ENCODE measurements at regions of chr15 and their contacts with region 1.

Region 1: DNA sequence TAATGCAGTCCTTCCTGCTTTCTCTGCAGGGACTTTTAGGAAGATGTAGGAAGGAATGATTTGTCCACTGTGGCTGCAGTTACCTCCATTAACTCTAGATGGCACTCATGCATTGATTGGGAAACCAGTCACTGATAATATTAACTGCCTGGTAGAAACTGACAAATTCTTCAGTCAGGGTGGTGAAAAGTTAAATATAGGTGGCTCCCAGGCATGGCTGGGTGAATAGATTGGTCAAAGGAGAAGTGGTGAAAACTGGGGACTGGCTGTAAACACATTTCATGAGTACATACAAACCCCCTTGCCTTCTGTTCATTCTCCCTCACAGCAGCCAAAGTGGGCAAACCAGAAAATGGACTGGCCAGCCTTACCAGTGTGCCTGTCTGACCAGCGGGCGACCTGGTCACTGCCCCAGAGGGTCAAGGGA is 333.4 kb downstream of the THSD4 start:
- DNase-seq: peak in 1 of 10 donors; percentile 53
- H3K4me3 ChIP-seq: no peak overlapping the region
- H3K27ac ChIP-seq: peak overlapping the region in 12 of 59 donors; percentile 1 to 46 (median 20)
- H3K27me3 ChIP-seq: no peaks in the 10 kb centered on the region
- CTCF ChIP-seq: peak; percentile 67 to 96 (median 88)

Region 2: GRCh38 chr15:71730277-71731144 is 281.8 kb after region 1 on chr15:
- intact Hi-C with region 1: loop called (anchors 1 to 5 kb)
- DNase-seq: peak in 2 of 10 donors; percentile 49 to 58
- H3K4me3 ChIP-seq: no peak overlapping the region
- H3K27ac ChIP-seq: no peak overlapping the region
- H3K27me3 ChIP-seq: peaks cover 0 to 7% (median 0%) of the 10 kb centered on the region in 45 donors
- CTCF ChIP-seq: peak; percentile 52 to 87 (median 75)

Region 3: GRCh38 chr15:71800835-71801745 is 352.4 kb after region 1 on chr15:
- intact Hi-C with region 1: loop called (anchors 5 to 10 kb)
- DNase-seq: peak in 3 of 10 donors; percentile 43 to 72 (median 54)
- H3K4me3 ChIP-seq: peak overlapping the region in 30 of 59 donors; percentile 4 to 44 (median 28)
- H3K27ac ChIP-seq: peak overlapping the region in 4 of 59 donors; percentile 2 to 48 (median 34)
- H3K27me3 ChIP-seq: no peaks in the 10 kb centered on the region
- CTCF ChIP-seq: peak; percentile 64 to 92 (median 84)

Measured in dorsolateral prefrontal cortex (tissue), 120 donors.